A673 (cell line): ENCODE measurements at regions of chr3 and their contacts with region 1.

Region 1: GRCh38 chr3:143775459-143775858 is 72.8 kb downstream of the SLC9A9 start:
- DNase-seq: peak; percentile 56
- H3K4me3 ChIP-seq: no peak overlapping the region
- H3K27ac ChIP-seq: no peak overlapping the region
- H3K4me1 ChIP-seq: no peaks in the 10 kb centered on the region
- H3K27me3 ChIP-seq: no peaks in the 10 kb centered on the region
- CTCF ChIP-seq: peak; percentile 64

Region 2: DNA sequence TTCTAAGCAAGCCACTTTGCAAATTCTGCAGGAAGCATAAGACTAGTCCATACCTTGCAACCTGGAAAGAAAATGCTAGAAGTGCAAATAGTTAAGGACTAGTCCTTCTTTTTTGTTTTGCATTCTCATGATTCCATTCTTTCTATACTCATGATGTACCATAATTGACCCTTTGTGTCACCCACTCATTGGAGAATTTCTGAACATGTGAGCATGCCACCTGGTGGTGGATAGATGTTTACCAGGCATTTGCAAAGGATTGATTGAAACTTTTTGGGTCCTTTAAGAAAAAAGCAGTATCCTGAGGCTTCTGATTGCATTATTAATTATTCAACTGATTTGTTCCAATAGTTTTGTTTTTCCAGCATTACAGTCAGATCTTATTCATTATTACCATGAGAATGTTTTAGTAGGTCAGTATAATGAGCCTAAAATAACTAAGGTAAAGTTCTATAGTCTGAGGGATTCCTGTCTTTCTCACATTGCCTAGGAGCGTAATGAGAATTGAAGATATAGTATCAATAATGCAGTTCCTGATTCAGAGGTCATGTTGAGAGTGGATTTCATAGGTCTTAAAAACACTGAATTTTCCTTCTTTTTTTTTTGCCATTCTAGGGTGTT is 176.0 kb after region 1 on chr3:
- CTCF ChIA-PET with region 1: no interaction called
- POLR2A ChIA-PET with region 1: no interaction called
- intact Hi-C with region 1: loop called (anchors 5 kb)
- DNase-seq: peak; percentile 63
- H3K4me3 ChIP-seq: no peak overlapping the region
- H3K27ac ChIP-seq: no peak overlapping the region
- H3K4me1 ChIP-seq: no peaks in the 10 kb centered on the region
- H3K27me3 ChIP-seq: no peaks in the 10 kb centered on the region
- CTCF ChIP-seq: peak; percentile 77

Region 3: GRCh38 chr3:144200466-144200865 is 425.0 kb after region 1 on chr3:
- CTCF ChIA-PET with region 1: no interaction called
- POLR2A ChIA-PET with region 1: no interaction called
- intact Hi-C with region 1: no loop called
- DNase-seq: no peak
- H3K4me3 ChIP-seq: no peak overlapping the region
- H3K27ac ChIP-seq: no peak overlapping the region
- H3K4me1 ChIP-seq: no peaks in the 10 kb centered on the region
- H3K27me3 ChIP-seq: no peaks in the 10 kb centered on the region
- CTCF ChIP-seq: no peak